Common myeloid progenitor, CD34-positive (primary cell): ENCODE measurements at regions of chr7 and their contacts with region 1.

Region 1: GRCh38 chr7:26365077-26365900 is 73.6 kb downstream of the SNX10 start:
- DNase-seq: peak; percentile 88 to 94 (median 91)
- H3K4me3 ChIP-seq: no peak overlapping the region
- H3K27ac ChIP-seq: no peak overlapping the region
- H3K4me1 ChIP-seq: peaks cover 5 to 31% (median 24%) of the 10 kb centered on the region in 4 experiments
- H3K27me3 ChIP-seq: no peaks in the 10 kb centered on the region

Region 2: GRCh38 chr7:26078437-26079336 is 286.6 kb before region 1 on chr7:
- CTCF ChIA-PET with region 1: interaction called, 15 read pairs
- POLR2A ChIA-PET with region 1: no interaction called
- DNase-seq: peak; percentile 80 to 87 (median 85)
- H3K4me3 ChIP-seq: peak overlapping the region in 3 of 7 experiments; percentile 37 to 58 (median 48)
- H3K27ac ChIP-seq: no peak overlapping the region
- H3K4me1 ChIP-seq: peaks cover 0 to 8% (median 0%) of the 10 kb centered on the region in 4 experiments
- H3K27me3 ChIP-seq: peaks cover 0 to 3% (median 0%) of the 10 kb centered on the region in 5 experiments

Region 3: DNA sequence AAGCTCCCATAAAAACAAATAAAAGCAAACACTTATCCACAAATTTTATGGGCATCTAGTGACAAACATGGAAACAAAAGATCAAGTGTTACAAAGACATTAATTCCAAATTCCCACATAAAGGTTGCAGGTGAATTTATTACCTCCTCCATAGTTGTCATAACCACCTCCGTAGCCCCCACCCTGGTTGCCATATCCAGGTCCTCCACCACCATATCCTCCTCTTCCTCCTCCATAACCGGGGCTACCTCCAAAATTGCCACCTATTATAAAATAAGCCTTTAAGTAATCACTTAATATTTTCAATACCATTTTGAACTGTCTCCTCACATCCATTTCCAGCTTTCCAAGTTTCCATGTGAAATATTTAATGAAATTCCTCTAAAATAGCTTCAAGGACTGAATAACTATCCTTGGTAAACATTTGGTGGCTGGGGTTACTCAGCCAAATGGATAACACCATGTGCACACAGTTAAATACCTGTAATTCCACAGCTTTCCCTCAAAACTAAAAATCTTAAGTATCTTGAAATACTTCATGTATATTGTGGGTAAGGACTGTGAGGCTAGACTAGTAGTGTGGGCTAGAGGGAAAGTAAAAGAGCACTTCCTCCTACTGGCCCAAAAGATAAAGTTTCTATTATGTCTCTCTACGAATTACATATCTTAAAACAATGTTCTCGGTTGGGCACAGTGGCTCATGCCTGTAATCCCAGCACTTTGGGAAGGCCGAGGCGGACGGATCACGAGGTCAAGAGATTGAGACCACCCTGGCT is 171.7 kb before region 1 on chr7:
- CTCF ChIA-PET with region 1: interaction called, 13 read pairs
- POLR2A ChIA-PET with region 1: no interaction called
- DNase-seq: peak in 2 of 3 donors; percentile 49 to 54
- H3K4me3 ChIP-seq: no peak overlapping the region
- H3K27ac ChIP-seq: no peak overlapping the region
- H3K4me1 ChIP-seq: peaks cover 36 to 58% (median 45%) of the 10 kb centered on the region in 4 experiments
- H3K27me3 ChIP-seq: no peaks in the 10 kb centered on the region

Region 4: DNA sequence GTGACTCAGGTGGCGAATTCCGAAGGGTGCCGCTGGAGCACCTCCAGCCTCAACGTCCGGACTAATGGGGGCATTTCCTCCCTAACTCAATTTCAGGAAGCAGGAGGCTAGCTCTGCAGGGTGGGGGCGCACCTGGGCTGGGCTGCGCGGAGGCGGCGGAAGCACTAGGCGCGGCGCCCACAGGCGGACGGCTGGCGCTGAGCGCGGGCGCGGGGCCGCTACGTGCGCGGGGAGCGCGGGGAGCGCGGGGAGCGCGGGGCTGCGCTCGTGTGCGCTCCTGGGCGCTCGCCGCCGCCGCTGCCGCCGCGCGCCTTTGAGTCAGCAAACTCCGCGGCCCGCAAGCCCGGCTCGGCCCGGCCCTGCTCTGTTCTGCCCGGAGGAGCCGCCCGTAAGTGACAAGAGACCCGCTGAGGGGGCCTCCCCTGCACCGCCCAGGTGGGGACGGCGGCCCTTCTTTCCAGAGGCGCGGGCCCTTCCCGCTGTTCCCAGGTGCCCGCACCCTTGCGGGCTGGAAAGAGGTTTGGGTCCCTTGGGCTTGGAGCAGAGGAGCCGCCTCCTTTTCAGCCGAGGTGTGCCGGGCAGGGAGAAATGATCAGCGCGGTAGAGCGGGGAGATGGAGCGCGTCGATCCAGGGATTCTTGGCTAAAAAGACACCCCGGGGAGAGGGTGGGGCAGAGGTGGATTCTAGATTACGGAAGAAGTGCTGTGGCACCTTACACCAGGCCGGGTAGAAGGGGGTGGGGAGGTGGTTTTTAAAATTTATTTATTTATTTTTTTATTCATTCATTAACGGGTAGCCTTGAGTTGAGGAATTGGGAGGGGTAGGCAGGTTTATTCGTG is 73.4 kb before region 1 on chr7 and contains the start of gene SNX10:
- CTCF ChIA-PET with region 1: interaction called, 16 read pairs
- POLR2A ChIA-PET with region 1: no interaction called
- DNase-seq: peak; percentile 82 to 91 (median 86)
- H3K4me3 ChIP-seq: peak within 1 kb of the TSS; percentile 78 to 94 (median 84)
- H3K27ac ChIP-seq: peak within 1 kb of the TSS; percentile 58 to 83
- H3K4me1 ChIP-seq: peaks cover 22 to 35% (median 32%) of the 10 kb centered on the region in 4 experiments
- H3K27me3 ChIP-seq: no peaks in the 10 kb centered on the region

Region 5: GRCh38 chr7:26413012-26413691 is 47.9 kb after region 1 on chr7:
- CTCF ChIA-PET with region 1: no interaction called
- POLR2A ChIA-PET with region 1: no interaction called
- DNase-seq: no peak
- H3K4me3 ChIP-seq: no peak overlapping the region
- H3K27ac ChIP-seq: no peak overlapping the region
- H3K4me1 ChIP-seq: peaks cover 0 to 5% (median 0%) of the 10 kb centered on the region in 4 experiments
- H3K27me3 ChIP-seq: no peaks in the 10 kb centered on the region

Region 6: GRCh38 chr7:26667500-26668133 is 302.3 kb after region 1 on chr7:
- CTCF ChIA-PET with region 1: interaction called, 198 read pairs
- POLR2A ChIA-PET with region 1: no interaction called
- DNase-seq: peak; percentile 98
- H3K4me3 ChIP-seq: peak overlapping the region in 4 of 7 experiments; percentile 2 to 67 (median 12)
- H3K27ac ChIP-seq: peak overlapping the region; percentile 77 to 83
- H3K4me1 ChIP-seq: peaks cover 11 to 64% (median 42%) of the 10 kb centered on the region in 4 experiments
- H3K27me3 ChIP-seq: no peaks in the 10 kb centered on the region

Region 7: DNA sequence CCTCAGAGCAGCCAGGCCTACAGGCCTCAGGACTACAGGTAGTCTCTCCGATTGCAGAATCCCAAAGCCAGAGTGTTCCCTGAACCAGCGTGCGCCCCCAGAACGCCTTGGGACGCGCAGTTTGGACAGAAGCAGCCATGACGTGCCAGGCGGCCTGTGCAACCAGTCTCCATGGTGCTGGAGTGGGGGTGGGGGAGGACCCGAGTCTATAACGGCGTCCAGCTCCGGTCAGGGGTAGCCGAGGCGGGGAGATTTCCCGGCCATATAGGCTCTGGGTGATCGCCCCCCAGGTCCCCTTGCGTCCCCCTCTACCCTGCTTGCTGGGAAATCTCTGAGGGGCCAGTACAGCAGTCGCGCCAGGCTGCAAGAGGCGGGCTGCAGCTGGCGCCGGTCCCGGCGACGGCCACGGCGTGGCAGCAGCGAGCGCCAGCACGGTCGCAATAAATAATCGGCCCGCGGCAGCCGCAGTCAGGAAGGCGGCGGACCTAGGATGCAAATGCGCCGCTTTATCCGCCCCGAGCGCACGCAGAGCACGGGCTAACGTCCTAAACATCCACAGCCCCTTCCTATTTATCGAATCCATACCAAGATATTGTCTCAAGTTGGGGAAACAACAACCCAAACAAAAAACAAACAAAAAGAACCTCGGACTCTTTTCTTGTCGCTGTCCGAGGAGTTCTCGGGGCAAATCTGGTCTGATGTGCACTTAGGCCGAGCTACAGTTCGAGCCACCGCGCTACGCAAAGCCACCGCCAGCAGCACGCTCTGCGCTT is 785.5 kb after region 1 on chr7:
- CTCF ChIA-PET with region 1: interaction called, 21 read pairs
- POLR2A ChIA-PET with region 1: interaction called, 3 read pairs
- DNase-seq: peak; percentile 83 to 91 (median 91)
- H3K4me3 ChIP-seq: peak overlapping the region; percentile 76 to 100 (median 91)
- H3K27ac ChIP-seq: peak overlapping the region; percentile 75 to 96
- H3K4me1 ChIP-seq: peaks cover 5 to 84% (median 80%) of the 10 kb centered on the region in 4 experiments
- H3K27me3 ChIP-seq: no peaks in the 10 kb centered on the region